Ascending aorta (tissue), 2 donors: ENCODE measurements at regions of chr20 and their contacts with region 1.

Region 1: DNA sequence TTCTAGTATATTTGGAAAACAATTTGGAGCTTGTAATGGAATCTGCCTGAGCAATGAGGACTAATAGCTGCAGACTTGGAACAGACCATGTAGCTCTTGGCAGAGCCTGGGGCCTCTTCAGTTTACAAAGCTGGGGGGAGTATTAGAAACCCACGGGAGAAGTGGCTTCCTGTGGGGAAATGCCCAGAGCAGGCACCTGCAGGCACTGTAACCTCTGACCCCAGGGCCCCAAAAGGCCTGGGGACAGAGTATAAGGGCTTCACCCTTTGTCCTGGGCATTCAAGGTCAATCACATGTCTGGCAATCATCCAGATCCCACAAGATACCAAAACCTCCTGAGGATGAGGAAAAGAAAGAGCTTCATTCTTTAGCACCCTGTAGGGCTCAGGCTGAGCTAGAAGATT is 19.4 kb downstream of the PKIG start:
- DNase-seq: peak in 1 of 2 donors; percentile 92
- H3K4me3 ChIP-seq: no peak overlapping the region
- H3K27ac ChIP-seq: peak overlapping the region; percentile 97
- H3K4me1 ChIP-seq: peaks cover 37 to 62% of the 10 kb centered on the region in 2 donors
- H3K27me3 ChIP-seq: no peaks in the 10 kb centered on the region
- CTCF ChIP-seq: no peak

Region 2: GRCh38 chr20:44572541-44573500 is 29.0 kb before region 1 on chr20:
- intact Hi-C with region 1: loop called (anchors 2 kb)
- DNase-seq: peak in 1 of 2 donors; percentile 80
- H3K4me3 ChIP-seq: peak overlapping the region in 1 of 2 donors; percentile 29
- H3K27ac ChIP-seq: peak overlapping the region; percentile 81 to 84
- H3K4me1 ChIP-seq: peaks cover 0 to 16% of the 10 kb centered on the region in 2 donors
- H3K27me3 ChIP-seq: no peaks in the 10 kb centered on the region
- CTCF ChIP-seq: no peak

Region 3: DNA sequence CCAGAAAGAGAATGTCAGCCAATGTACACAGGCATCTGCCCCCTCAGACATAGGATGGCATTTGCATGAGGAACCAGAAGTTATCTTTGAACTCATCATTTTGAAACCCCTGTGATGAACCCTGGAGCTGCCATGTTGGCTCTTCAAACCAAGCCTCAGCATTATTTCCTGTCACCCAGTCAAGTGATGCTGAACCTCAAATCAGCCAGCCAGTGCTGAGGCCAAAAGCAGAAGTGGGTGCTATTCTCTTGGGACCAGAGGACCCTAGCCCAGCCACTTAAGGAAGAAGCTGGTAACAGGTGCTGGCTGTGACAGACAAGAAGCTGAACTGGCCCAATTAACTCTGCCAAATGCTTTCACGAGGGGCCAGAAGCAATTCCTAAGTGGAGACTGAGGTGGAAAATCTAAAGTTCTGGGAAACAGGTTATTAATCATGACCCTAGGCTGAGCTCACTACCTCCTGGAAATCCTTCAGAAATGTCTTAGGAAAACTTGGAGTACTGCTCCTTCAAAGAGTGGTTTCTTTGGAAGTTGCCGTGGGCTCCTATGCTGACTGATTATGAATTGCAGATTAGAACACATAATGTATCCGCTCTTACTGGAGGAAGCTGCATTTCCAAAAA is 15.4 kb before region 1 on chr20:
- intact Hi-C with region 1: loop called (anchors 2 kb)
- DNase-seq: no peak
- H3K4me3 ChIP-seq: peak overlapping the region in 1 of 2 donors; percentile 33
- H3K27ac ChIP-seq: peak overlapping the region; percentile 62 to 83
- H3K4me1 ChIP-seq: peaks cover 25 to 36% of the 10 kb centered on the region in 2 donors
- H3K27me3 ChIP-seq: no peaks in the 10 kb centered on the region
- CTCF ChIP-seq: no peak

Region 4: GRCh38 chr20:44765652-44766347 is 164.0 kb after region 1 on chr20:
- intact Hi-C with region 1: no loop called
- DNase-seq: no peak
- H3K4me3 ChIP-seq: no peak overlapping the region
- H3K27ac ChIP-seq: no peak overlapping the region
- H3K4me1 ChIP-seq: no peaks in the 10 kb centered on the region
- H3K27me3 ChIP-seq: no peaks in the 10 kb centered on the region
- CTCF ChIP-seq: no peak